HEK293 (cell line): ENCODE measurements at regions of chrX and their contacts with region 1.

Region 1: GRCh38 chrX:73817393-73818199 is 254.6 kb downstream of the CHIC1 start:
- H3K4me3 ChIP-seq: no peak overlapping the region
- H3K27ac ChIP-seq: peak overlapping the region; percentile 69
- H3K4me1 ChIP-seq: peaks cover 36% of the 10 kb centered on the region
- CTCF ChIP-seq: no peak

Region 2: GRCh38 chrX:73768120-73768519 is 49.5 kb before region 1 on chrX:
- CTCF ChIA-PET with region 1: no interaction called
- POLR2A ChIA-PET with region 1: no interaction called
- H3K4me3 ChIP-seq: no peak overlapping the region
- H3K27ac ChIP-seq: no peak overlapping the region
- H3K4me1 ChIP-seq: peaks cover 3% of the 10 kb centered on the region
- CTCF ChIP-seq: no peak

Region 3: GRCh38 chrX:73831500-73831899 is 13.9 kb after region 1 on chrX:
- CTCF ChIA-PET with region 1: interaction called, 3 read pairs
- POLR2A ChIA-PET with region 1: interaction called, 10 read pairs
- H3K4me3 ChIP-seq: no peak overlapping the region
- H3K27ac ChIP-seq: peak overlapping the region; percentile 79
- H3K4me1 ChIP-seq: peaks cover 87% of the 10 kb centered on the region
- CTCF ChIP-seq: no peak

Region 4: GRCh38 chrX:74666286-74666685 is 848.7 kb after region 1 on chrX:
- CTCF ChIA-PET with region 1: no interaction called
- POLR2A ChIA-PET with region 1: interaction called, 10 read pairs
- H3K4me3 ChIP-seq: no peak overlapping the region
- H3K27ac ChIP-seq: no peak overlapping the region
- H3K4me1 ChIP-seq: no peaks in the 10 kb centered on the region
- CTCF ChIP-seq: no peak